ENCODE measurements at regions of chr6 and their contacts with region 1.

Region 1: DNA sequence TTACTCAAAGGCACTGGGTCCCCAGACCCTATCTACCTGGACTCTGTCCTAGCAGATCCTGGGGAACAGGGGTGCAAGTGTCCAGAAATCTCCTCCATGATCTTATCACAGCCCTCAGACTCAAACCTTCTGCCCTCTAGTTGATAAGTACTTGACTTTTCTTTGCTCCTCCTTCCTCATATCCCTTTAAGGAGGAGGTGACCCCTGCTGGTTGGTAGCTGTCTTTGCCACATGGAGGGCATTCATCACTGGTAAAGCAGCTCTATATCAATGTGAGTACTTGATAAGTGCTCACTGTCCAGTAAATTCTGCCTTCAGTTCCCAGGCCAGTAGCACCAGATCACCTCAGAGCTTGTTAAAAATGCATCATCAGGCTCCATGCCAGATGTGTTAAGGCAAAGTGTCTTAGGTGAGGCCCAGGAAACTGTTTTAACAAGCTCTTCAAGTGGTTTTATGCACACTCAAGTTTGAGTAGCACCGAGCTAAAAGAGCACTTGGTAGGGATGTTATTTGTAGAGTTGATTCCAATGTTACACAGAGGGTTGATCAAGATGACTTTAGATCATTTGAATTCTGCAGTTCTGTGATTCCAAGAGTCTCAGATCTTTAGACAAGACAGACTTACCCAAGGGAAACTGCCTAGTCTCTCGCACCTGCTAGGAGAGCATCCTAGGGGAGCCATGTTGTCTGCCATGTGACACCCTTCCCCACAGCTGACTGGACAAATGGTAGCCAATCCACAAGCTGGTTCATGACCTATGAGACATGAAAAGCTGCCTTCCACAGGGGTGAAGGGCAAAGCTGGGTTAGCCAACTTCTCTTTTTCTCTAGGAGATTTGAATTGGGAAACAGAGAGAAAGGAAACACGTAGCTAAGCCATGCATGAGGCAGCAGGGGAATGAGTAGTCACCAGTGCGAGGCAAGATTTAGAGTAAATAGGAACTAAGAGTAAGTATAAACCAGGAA is 18.6 kb downstream of the TREML2 start:
- DNase-seq: peak; percentile 47 to 65 (median 56)
- H3K4me3 ChIP-seq: no peak overlapping the region
- H3K4me3 Mint-ChIP-seq: no peak overlapping the region
- H3K27ac ChIP-seq: no peak overlapping the region
- H3K27ac Mint-ChIP-seq: peak overlapping the region in 1 of 7 donors; percentile 2
- H3K4me1 ChIP-seq: peaks cover 7% of the 10 kb centered on the region
- H3K4me1 Mint-ChIP-seq: peaks cover 7 to 14% (median 10%) of the 10 kb centered on the region in 4 donors
- H3K27me3 ChIP-seq: no peaks in the 10 kb centered on the region
- H3K27me3 Mint-ChIP-seq: peaks cover 3 to 6% of the 10 kb centered on the region in 2 donors

Region 2: GRCh38 chr6:41092421-41093140 is 89.8 kb before region 1 on chr6:
- CTCF ChIA-PET with region 1: interaction called, 9 read pairs
- POLR2A ChIA-PET with region 1: no interaction called
- intact Hi-C with region 1: loop called (anchors 2 kb)
- DNase-seq: peak in 1 of 5 donors; percentile 9
- H3K4me3 ChIP-seq: no peak overlapping the region
- H3K4me3 Mint-ChIP-seq: no peak overlapping the region
- H3K27ac ChIP-seq: no peak overlapping the region
- H3K27ac Mint-ChIP-seq: peak overlapping the region in 1 of 7 donors; percentile 25
- H3K4me1 ChIP-seq: no peaks in the 10 kb centered on the region
- H3K4me1 Mint-ChIP-seq: peaks cover 0 to 12% (median 4%) of the 10 kb centered on the region in 4 donors
- H3K27me3 ChIP-seq: no peaks in the 10 kb centered on the region
- H3K27me3 Mint-ChIP-seq: no peaks in the 10 kb centered on the region

Region 3: DNA sequence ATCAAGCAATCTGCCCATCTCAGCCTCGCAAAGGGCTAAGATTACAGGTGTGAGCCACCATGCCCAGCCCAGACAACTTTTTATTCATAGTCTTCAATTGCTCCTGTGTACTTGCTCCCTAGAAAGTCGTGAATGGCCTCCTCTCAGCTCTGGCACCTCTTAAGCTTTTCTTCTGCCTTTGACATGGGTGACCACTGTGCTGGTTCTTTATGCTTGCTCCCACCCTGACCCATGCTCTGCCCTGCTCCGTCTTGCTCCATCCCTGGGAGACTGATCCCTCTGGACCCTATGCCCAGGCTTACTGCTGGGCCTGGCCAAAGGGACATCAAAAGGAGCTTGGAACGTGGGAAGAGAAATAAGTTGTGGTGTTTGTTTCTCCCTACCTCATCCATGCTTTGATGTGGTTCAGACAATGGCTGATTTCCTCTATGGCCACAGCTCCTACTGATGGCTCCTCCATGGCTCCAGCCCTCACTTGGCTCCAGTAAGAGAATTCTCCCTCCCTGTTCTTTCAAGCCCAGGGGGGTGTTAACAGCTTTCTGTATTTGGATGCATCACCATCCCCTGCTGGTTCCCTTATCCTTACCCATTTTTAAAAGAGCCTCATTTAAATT is 11.7 kb before region 1 on chr6:
- CTCF ChIA-PET with region 1: interaction called, 37 read pairs
- POLR2A ChIA-PET with region 1: no interaction called
- intact Hi-C with region 1: no loop called
- DNase-seq: no peak
- H3K4me3 ChIP-seq: no peak overlapping the region
- H3K4me3 Mint-ChIP-seq: no peak overlapping the region
- H3K27ac ChIP-seq: no peak overlapping the region
- H3K27ac Mint-ChIP-seq: no peak overlapping the region
- H3K4me1 ChIP-seq: no peaks in the 10 kb centered on the region
- H3K4me1 Mint-ChIP-seq: peaks cover 0 to 3% (median 0%) of the 10 kb centered on the region in 4 donors
- H3K27me3 ChIP-seq: no peaks in the 10 kb centered on the region
- H3K27me3 Mint-ChIP-seq: peaks cover 1 to 5% of the 10 kb centered on the region in 2 donors

Region 4: DNA sequence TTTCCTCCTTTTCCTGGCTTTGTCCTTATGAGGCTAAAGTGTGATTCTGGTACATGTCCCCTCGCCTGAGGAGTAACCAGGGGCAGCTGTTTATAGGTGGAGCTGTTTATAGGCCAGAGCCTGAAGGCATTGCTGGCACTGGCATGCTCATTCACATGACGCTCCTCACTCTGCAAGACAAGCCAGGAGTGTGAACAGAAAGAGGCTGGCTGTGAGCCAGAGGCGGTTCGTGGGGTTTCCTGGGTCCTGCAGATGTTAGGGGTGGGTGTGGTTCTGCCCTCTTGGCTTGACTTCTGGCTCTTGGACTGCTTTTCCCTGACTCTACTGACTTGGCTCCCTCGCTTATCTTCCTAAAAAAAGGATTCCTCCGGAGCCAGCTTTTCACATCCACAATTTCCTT is 443.1 kb after region 1 on chr6:
- CTCF ChIA-PET with region 1: no interaction called
- POLR2A ChIA-PET with region 1: no interaction called
- intact Hi-C with region 1: no loop called
- DNase-seq: peak in 1 of 5 donors; percentile 13
- H3K4me3 ChIP-seq: no peak overlapping the region
- H3K4me3 Mint-ChIP-seq: peak overlapping the region in 4 of 8 donors; percentile 13 to 72 (median 26)
- H3K27ac ChIP-seq: no peak overlapping the region
- H3K27ac Mint-ChIP-seq: no peak overlapping the region
- H3K4me1 ChIP-seq: no peaks in the 10 kb centered on the region
- H3K4me1 Mint-ChIP-seq: peaks cover 9 to 13% (median 11%) of the 10 kb centered on the region in 4 donors
- H3K27me3 ChIP-seq: no peaks in the 10 kb centered on the region
- H3K27me3 Mint-ChIP-seq: peaks cover 15 to 19% of the 10 kb centered on the region in 2 donors

Measured in CD4-positive, alpha-beta memory T cell (primary cell).